ENCODE measurements at regions of chr17 and their contacts with region 1.

Region 1: DNA sequence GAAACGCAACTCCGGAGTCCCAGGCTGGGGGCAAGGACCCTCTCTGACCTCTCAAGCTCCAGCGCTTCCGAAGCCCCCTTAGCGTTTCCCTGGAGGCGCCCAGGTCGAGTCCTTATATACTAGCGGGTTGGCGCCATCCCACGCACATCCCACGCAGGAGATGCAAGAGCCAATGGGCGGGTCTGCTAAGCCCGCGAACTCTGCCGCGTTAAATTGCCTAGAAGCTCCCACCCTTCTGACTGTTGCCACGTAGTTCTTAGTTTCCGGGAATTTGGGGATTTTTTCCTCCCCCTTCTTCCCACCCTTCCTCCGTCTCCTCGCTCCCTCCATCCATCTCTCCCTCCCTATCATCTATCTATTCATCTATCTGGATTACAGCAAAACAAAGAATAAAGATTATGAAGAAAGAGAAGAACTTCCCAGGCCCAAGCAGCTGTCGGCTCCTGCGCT is at the start of gene SLFN11:
- H3K4me3 Mint-ChIP-seq: peak within 1 kb of the TSS; percentile 81
- H3K27ac Mint-ChIP-seq: peak within 1 kb of the TSS; percentile 95
- H3K4me1 Mint-ChIP-seq: peaks cover 71% of the 10 kb centered on the region
- H3K27me3 Mint-ChIP-seq: no peaks in the 10 kb centered on the region

Region 2: GRCh38 chr17:33786478-33786877 is 1587.1 kb before region 1 on chr17:
- intact Hi-C with region 1: no loop called
- H3K4me3 Mint-ChIP-seq: no peak overlapping the region
- H3K27ac Mint-ChIP-seq: no peak overlapping the region
- H3K4me1 Mint-ChIP-seq: no peaks in the 10 kb centered on the region
- H3K27me3 Mint-ChIP-seq: peaks cover 5% of the 10 kb centered on the region

Region 3: GRCh38 chr17:35242805-35243560 is 130.6 kb before region 1 on chr17 and contains the start of gene SLFN5:
- intact Hi-C with region 1: loop called (anchors 10 kb)
- H3K4me3 Mint-ChIP-seq: peak within 1 kb of the TSS; percentile 94
- H3K27ac Mint-ChIP-seq: peak within 1 kb of the TSS; percentile 99
- H3K4me1 Mint-ChIP-seq: peaks cover 50% of the 10 kb centered on the region
- H3K27me3 Mint-ChIP-seq: peaks cover 7% of the 10 kb centered on the region

Region 4: GRCh38 chr17:35345926-35346771 is 27.4 kb before region 1 on chr17:
- intact Hi-C with region 1: loop called (anchors 5 kb)
- H3K4me3 Mint-ChIP-seq: peak overlapping the region; percentile 75
- H3K27ac Mint-ChIP-seq: peak overlapping the region; percentile 93
- H3K4me1 Mint-ChIP-seq: peaks cover 67% of the 10 kb centered on the region
- H3K27me3 Mint-ChIP-seq: no peaks in the 10 kb centered on the region

Region 5: DNA sequence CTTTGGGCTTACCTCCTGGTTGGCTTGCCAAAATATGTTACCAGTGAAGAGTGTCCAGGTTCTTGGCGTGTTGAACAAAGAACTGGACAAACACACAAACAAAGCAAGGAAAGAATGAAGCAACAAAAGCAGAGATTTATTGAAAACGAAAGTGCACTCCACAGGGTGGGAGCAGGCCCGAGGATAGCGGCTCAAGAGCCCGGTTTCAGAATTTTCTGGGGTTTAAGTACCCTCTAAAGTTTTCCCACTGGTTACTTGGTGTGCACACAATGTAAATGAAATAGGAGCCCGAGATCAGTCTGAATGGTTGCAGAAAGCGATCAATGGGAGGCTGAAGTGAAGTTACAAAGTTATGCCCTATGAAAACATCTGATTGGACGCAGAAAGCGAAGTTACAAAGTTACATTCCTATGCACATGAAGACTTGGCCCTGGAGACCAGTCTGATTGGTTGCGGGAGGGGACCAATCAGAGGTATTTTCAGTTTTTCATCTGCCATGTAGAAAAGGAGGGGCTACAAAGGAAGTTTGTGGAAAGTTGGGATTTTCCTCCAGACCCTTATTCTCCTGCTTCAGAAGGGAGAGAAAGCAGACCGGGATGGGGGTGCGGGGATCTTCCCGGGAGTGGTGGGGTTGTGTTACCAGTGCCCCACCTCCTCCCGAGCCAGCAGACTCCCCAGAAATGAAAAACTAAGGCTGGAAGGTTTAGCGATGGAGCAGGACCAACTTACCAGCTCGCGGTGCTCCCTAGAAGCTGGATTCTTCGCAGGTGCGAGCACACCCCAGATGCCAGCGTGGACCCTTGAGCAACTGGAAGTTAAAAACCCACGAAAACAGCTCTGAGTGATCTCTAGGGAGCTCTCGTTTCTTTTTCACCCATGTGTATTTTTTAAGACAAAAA is 58.9 kb after region 1 on chr17 and contains the start of gene SLFN12:
- intact Hi-C with region 1: loop called (anchors 2 kb)
- H3K4me3 Mint-ChIP-seq: peak within 1 kb of the TSS; percentile 86
- H3K27ac Mint-ChIP-seq: peak within 1 kb of the TSS; percentile 89
- H3K4me1 Mint-ChIP-seq: peaks cover 58% of the 10 kb centered on the region
- H3K27me3 Mint-ChIP-seq: no peaks in the 10 kb centered on the region

Region 6: DNA sequence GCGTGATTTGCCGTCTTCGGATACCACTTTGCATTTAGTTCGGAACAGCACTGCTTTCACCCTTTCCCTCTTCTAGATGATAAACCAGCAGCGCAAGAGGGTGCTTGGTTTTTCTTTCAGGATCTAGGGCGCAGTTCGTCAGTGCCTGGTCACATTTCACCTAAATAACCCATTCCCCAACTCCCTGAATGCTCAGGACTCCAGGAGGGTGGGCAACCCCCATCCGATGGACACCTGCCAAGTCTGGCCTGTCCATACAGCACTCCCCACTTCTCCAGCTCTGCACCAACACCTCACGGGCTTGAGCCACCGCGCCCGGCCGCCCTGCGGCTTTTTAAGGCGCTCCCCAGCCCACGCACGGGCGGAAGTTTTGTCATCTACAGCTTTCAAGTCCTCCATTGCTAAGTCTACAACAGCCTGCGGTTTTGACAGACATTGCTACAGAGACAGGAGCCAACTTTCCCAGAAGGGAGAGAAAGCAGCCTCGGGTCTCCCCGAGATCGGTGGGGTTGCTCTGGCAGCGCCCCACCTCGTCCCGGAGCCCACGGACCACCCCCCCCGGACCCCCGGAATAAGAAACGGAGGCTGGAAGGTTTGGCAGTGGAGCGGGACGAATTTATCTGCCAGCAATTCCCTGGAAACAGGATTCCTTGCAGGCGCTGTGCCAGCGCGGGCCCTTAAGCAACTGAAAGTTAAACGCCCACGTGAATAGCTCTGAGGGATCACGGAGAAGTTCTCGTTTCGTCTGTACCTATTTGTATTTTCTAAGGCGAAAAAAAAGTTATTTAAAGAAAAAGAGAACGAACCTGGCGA is 113.6 kb after region 1 on chr17:
- intact Hi-C with region 1: loop called (anchors 5 kb)
- H3K4me3 Mint-ChIP-seq: peak overlapping the region; percentile 78
- H3K27ac Mint-ChIP-seq: peak overlapping the region; percentile 83
- H3K4me1 Mint-ChIP-seq: peaks cover 48% of the 10 kb centered on the region
- H3K27me3 Mint-ChIP-seq: peaks cover 84% of the 10 kb centered on the region